Right lobe of liver (tissue), 6 donors: ENCODE measurements at regions of chr1 and their contacts with region 1.

Region 1: GRCh38 chr1:116737020-116737854 is 17.0 kb upstream of the CD2 start:
- DNase-seq: peak in 1 of 3 donors; percentile 50
- ATAC-seq: peak; percentile 81 to 93 (median 85)
- H3K4me3 ChIP-seq: no peak overlapping the region
- H3K27ac ChIP-seq: no peak overlapping the region
- H3K4me1 ChIP-seq: no peaks in the 10 kb centered on the region
- H3K27me3 ChIP-seq: no peaks in the 10 kb centered on the region
- CTCF ChIP-seq: peak; percentile 78 to 81 (median 80)
- POLR2A ChIP-seq: no peak

Region 2: DNA sequence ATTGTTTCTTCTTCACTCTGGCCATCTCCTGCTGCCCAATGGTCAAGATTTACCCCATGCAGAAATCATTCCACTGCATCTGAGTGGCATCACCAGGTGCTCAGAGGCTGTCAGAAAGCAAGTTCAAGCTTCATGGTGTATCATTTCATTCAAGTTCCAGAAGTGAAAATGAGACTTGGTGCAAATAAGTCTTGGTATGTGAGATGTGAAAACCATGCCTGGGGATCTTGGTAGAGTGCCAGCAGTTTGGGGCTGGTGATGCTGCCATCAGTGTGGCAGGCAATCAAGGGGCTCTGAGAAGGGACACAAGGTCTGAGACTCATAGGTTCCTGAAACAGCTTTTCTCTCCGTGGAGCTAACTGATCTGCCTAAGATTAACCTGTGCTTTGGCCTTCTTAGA is 69.0 kb after region 1 on chr1:
- intact Hi-C with region 1: loop called in 1 of 2 experiments (anchors 10 kb)
- DNase-seq: no peak
- ATAC-seq: no peak
- H3K4me3 ChIP-seq: no peak overlapping the region
- H3K27ac ChIP-seq: no peak overlapping the region
- H3K4me1 ChIP-seq: no peaks in the 10 kb centered on the region
- H3K27me3 ChIP-seq: no peaks in the 10 kb centered on the region
- CTCF ChIP-seq: no peak
- POLR2A ChIP-seq: no peak

Region 3: GRCh38 chr1:117051224-117052064 is 314.2 kb after region 1 on chr1:
- intact Hi-C with region 1: loop called (anchors 5 kb)
- DNase-seq: no peak
- ATAC-seq: peak; percentile 39 to 63 (median 59)
- H3K4me3 ChIP-seq: no peak overlapping the region
- H3K27ac ChIP-seq: peak overlapping the region in 1 of 3 donors; percentile 34
- H3K4me1 ChIP-seq: no peaks in the 10 kb centered on the region
- H3K27me3 ChIP-seq: no peaks in the 10 kb centered on the region
- CTCF ChIP-seq: no peak
- POLR2A ChIP-seq: no peak